GM12878 (cell line): ENCODE measurements at regions of chr14 and their contacts with region 1.

Region 1: GRCh38 chr14:92551044-92551841 is 37.7 kb downstream of the RIN3 start:
- DNase-seq: peak; percentile 82
- ATAC-seq: peak; percentile 92
- H3K4me3 ChIP-seq: peak overlapping the region; percentile 12; the same call in 1 of the 2 replicates
- H3K27ac ChIP-seq: 0 out of 2 replicates have a peak overlapping the region, but pooled peaks have one; percentile 20
- H3K4me1 ChIP-seq: peaks cover 41% of the 10 kb centered on the region
- H3K27me3 ChIP-seq: no peaks in the 10 kb centered on the region
- CTCF ChIP-seq: peak; percentile 36 to 64 (median 44); a peak in 5 of 6 replicates
- EP300 ChIP-seq: peak; percentile 69 to 75; a peak in 2 of 4 replicates
- POLR2A ChIP-seq: no peak
- RAD21 ChIP-seq: peak; percentile 45

Region 2: GRCh38 chr14:92121670-92122350 is 429.4 kb before region 1 on chr14 and contains the starts of genes CPSF2 and NDUFB1:
- CTCF ChIA-PET with region 1: no interaction called
- POLR2A ChIA-PET with region 1: no interaction called
- RAD21 ChIA-PET with region 1: no interaction called
- SMC1A ChIA-PET with region 1: no interaction called
- in situ Hi-C with region 1: no loop called
- intact Hi-C with region 1: loop called (anchors 5 kb)
- DNase-seq: peak; percentile 45
- ATAC-seq: peak; percentile 93
- H3K4me3 ChIP-seq: peak within 1 kb of the TSS; percentile 96
- H3K27ac ChIP-seq: peak within 1 kb of the TSS; percentile 95
- H3K4me1 ChIP-seq: peaks cover 6% of the 10 kb centered on the region; the same call in 1 of the 2 replicates
- H3K27me3 ChIP-seq: no peaks in the 10 kb centered on the region
- CTCF ChIP-seq: no peak
- EP300 ChIP-seq: no peak
- POLR2A ChIP-seq: peak; percentile 98
- RAD21 ChIP-seq: no peak
- polyA plus RNA-seq, gene CPSF2: 18.2 to 20.1 TPM
- polyA plus RNA-seq, gene NDUFB1: 626 to 780 TPM

Region 3: GRCh38 chr14:92525442-92526095 is 25.7 kb before region 1 on chr14:
- CTCF ChIA-PET with region 1: interaction called, 3 read pairs
- POLR2A ChIA-PET with region 1: no interaction called
- RAD21 ChIA-PET with region 1: no interaction called
- SMC1A ChIA-PET with region 1: interaction called, 5 read pairs
- in situ Hi-C with region 1: no loop called
- intact Hi-C with region 1: loop called (anchors 1 kb)
- DNase-seq: no peak
- ATAC-seq: no peak
- H3K4me3 ChIP-seq: no peak overlapping the region
- H3K27ac ChIP-seq: no peak overlapping the region
- H3K4me1 ChIP-seq: no peaks in the 10 kb centered on the region
- H3K27me3 ChIP-seq: no peaks in the 10 kb centered on the region
- CTCF ChIP-seq: no peak
- EP300 ChIP-seq: no peak
- POLR2A ChIP-seq: no peak
- RAD21 ChIP-seq: no peak

Region 4: GRCh38 chr14:92563359-92563758 is 12.1 kb after region 1 on chr14:
- CTCF ChIA-PET with region 1: interaction called, 7 read pairs
- POLR2A ChIA-PET with region 1: interaction called, 7 read pairs
- RAD21 ChIA-PET with region 1: interaction called, 12 read pairs
- SMC1A ChIA-PET with region 1: interaction called, 29 read pairs
- in situ Hi-C with region 1: no loop called
- intact Hi-C with region 1: no loop called
- DNase-seq: peak; percentile 53
- ATAC-seq: peak; percentile 96
- H3K4me3 ChIP-seq: no peak overlapping the region
- H3K27ac ChIP-seq: no peak overlapping the region; the same call in 1 of the 2 replicates
- H3K4me1 ChIP-seq: peaks cover 24% of the 10 kb centered on the region
- H3K27me3 ChIP-seq: no peaks in the 10 kb centered on the region
- CTCF ChIP-seq: no peak
- EP300 ChIP-seq: peak in 1 of 2 experiments; percentile 78; a peak in 1 of 4 replicates
- POLR2A ChIP-seq: no peak
- RAD21 ChIP-seq: no peak

Region 5: GRCh38 chr14:92568621-92569479 is 17.6 kb after region 1 on chr14:
- CTCF ChIA-PET with region 1: interaction called, 7 read pairs
- POLR2A ChIA-PET with region 1: interaction called, 7 read pairs
- RAD21 ChIA-PET with region 1: interaction called, 12 read pairs
- SMC1A ChIA-PET with region 1: interaction called, 29 read pairs
- in situ Hi-C with region 1: no loop called
- intact Hi-C with region 1: no loop called
- DNase-seq: peak; percentile 76
- ATAC-seq: peak; percentile 93
- H3K4me3 ChIP-seq: peak overlapping the region; percentile 11; the same call in 1 of the 2 replicates
- H3K27ac ChIP-seq: peak overlapping the region; percentile 88
- H3K4me1 ChIP-seq: peaks cover 31% of the 10 kb centered on the region
- H3K27me3 ChIP-seq: no peaks in the 10 kb centered on the region
- CTCF ChIP-seq: 0 out of 6 replicates have a peak, but pooled peaks of 1 of the 3 experiments have one; percentile 1
- EP300 ChIP-seq: no peak; a peak in 1 of 4 replicates
- POLR2A ChIP-seq: peak; percentile 42; the same call in 1 of the 2 replicates
- RAD21 ChIP-seq: 0 out of 2 replicates have a peak, but pooled peaks have one; percentile 10